SK-N-SH (cell line): ENCODE measurements at regions of chr9 and their contacts with region 1.

Region 1: DNA sequence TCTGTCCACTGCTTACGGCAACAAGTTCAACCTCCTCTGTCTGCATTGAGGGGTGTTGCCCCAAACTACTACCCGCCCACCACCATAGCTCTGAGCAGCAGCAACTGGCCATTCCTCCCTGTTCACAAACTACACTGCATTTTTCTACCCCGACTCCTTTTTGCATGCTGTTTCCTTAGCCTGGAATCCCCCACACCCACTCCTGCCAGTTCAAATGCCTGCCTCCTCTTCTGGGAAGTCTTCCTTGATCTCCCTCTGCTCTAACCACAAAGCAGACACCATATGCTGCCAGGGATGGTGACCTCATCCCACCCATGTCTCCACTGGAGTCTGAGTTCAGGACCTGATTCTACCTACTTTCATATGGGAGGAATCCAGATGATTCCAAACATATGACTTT is 13.3 kb downstream of the ALDH1B1 start:
- DNase-seq: no peak
- H3K4me3 ChIP-seq: no peak overlapping the region
- H3K27ac ChIP-seq: no peak overlapping the region
- H3K4me1 ChIP-seq: peaks cover 0 to 5% of the 10 kb centered on the region in 2 experiments; a peak in 1 of 4 replicates
- H3K27me3 ChIP-seq: peaks cover 4% of the 10 kb centered on the region; the same call in 1 of the 2 replicates
- CTCF ChIP-seq: no peak
- EP300 ChIP-seq: no peak
- RAD21 ChIP-seq: no peak

Region 2: DNA sequence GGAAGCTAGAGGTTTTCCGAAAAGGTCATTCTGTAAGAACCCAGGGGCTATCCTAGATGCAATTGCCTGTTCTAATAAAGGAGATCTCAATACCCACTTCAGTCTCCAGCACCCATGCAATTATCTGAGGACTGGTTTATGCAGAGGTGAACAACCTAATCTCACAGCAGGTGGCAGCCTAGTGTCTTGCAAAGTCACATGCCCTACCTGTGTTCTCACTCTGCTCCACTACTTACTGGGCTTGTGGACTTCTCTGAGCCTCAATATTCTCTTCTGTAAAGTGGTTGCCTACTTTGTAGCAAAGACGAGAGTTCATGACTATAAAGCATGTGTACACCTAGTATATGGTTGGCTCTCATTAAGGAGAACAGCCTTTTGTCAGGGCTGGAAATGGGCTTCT is 34.3 kb before region 1 on chr9:
- CTCF ChIA-PET with region 1: interaction called, 47 read pairs
- POLR2A ChIA-PET with region 1: interaction called, 3 read pairs
- DNase-seq: no peak
- H3K4me3 ChIP-seq: no peak overlapping the region
- H3K27ac ChIP-seq: peak overlapping the region in 1 of 2 experiments; percentile 97; a peak in 2 of 4 replicates
- H3K4me1 ChIP-seq: peaks cover 0 to 31% of the 10 kb centered on the region in 2 experiments; a peak in 2 of 4 replicates
- H3K27me3 ChIP-seq: peaks cover 14% of the 10 kb centered on the region; the same call in 1 of the 2 replicates
- CTCF ChIP-seq: peak; percentile 14; the same call in 1 of the 2 replicates
- EP300 ChIP-seq: no peak
- RAD21 ChIP-seq: peak; percentile 74

Region 3: DNA sequence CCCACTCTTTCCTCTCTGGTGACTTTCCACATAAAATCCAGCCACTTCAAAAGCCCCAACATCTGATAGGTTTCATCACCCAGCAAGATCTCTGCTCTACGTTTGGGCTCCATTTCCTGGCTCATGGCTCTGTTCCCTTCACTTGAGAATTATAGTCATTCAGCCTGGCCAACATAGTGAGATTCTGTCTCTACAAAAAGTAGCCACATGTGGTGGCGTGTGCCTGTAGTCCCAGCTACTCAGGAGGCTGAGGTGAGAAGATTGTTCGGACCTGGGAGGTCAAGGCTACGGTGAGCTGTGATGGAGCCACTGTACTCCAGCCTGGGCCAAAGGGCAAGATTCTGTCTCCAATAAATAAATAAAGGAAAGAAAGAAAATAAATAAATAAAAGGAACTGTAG is 101.8 kb after region 1 on chr9:
- CTCF ChIA-PET with region 1: no interaction called
- POLR2A ChIA-PET with region 1: no interaction called
- DNase-seq: no peak
- H3K4me3 ChIP-seq: no peak overlapping the region
- H3K27ac ChIP-seq: no peak overlapping the region
- H3K4me1 ChIP-seq: no peaks in the 10 kb centered on the region
- H3K27me3 ChIP-seq: no peaks in the 10 kb centered on the region
- CTCF ChIP-seq: no peak
- EP300 ChIP-seq: no peak
- RAD21 ChIP-seq: no peak